Colonic mucosa (tissue), 4 donors: ENCODE measurements at regions of chr5 and their contacts with region 1.

Region 1: GRCh38 chr5:1641560-1642166 is 117.9 kb upstream of the LPCAT1 start:
- DNase-seq: peak; percentile 85
- H3K4me3 ChIP-seq: no peak overlapping the region
- H3K27ac ChIP-seq: no peak overlapping the region
- H3K4me1 ChIP-seq: no peaks in the 10 kb centered on the region
- H3K27me3 ChIP-seq: peaks cover 18% of the 10 kb centered on the region
- CTCF ChIP-seq: peak; percentile 64

Region 2: DNA sequence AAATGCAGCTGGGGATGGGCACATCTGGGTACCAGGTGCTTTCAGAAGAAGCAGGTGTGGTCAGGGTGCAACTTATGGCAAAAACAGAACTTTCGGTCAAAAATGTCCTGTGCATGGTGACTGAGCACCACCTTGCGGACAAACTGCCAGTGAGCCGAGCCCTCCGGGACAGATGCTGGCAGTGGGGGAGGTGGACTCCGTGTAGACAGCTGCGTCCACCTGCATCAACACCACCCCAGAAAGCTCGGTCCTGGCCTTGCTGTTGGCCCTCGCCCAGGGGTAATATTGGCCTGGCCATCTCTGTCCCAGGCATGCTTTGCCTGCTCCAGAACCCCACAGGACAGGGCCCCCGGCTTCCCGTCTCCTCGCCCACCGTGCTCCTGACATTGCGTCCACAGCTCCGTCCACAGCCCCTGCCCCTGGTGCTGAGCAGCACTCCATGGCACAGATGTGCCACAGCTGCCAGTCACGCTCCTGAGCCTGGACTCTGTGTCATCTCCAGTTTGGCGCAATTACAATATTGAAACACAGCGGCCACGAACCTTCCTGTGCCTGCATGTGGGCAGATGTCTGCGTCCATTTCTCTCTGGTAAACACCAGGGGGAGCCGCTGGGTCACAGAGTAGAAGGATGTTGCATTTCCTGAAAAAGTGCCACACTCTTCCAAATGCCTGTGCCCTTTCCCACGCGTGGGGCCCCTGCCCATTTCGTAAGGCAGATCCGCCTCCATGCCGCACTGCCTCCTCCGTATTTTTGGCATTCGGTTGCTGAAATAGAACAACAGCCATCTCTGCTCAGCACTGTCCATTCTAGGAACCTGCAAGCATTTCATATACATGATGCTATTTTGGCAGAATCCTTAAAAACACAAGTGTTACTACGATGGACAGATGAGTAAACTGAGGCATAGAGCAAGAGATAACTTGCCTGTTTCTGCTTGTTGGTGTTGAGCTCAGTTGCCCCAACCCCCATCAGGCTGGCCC is 473.6 kb before region 1 on chr5:
- intact Hi-C with region 1: loop called (anchors 5 kb)
- DNase-seq: peak; percentile 75
- H3K4me3 ChIP-seq: no peak overlapping the region
- H3K27ac ChIP-seq: no peak overlapping the region
- H3K4me1 ChIP-seq: peaks cover 5% of the 10 kb centered on the region
- H3K27me3 ChIP-seq: no peaks in the 10 kb centered on the region
- CTCF ChIP-seq: peak; percentile 21

Region 3: DNA sequence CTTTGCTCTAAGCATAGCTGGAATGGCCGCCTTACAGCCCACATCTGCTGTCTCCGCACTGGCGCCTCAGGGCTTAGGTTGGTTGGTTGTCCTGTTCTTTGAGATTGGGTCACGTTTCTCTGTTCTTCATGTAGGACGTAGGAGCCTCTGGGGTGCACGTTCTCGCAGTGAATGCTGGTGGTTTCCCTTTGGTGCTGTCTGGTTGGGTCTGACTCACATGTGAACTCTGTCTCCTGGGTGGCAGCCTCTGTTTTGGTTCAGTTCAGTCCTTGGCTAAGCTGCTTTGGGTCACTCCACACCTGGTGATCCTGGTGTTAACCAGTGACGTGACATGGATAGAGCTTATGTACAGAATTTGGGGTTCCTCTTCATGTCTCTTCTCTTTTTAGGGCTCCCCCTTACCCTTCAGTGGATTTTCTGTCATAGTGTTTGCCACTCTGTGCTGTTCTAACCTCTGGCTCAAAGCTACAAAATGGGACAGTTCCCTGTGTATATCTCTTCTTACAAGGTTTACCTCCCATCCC is 105.3 kb before region 1 on chr5:
- intact Hi-C with region 1: no loop called
- DNase-seq: peak; percentile 27
- H3K4me3 ChIP-seq: no peak overlapping the region
- H3K27ac ChIP-seq: peak overlapping the region; percentile 10
- H3K4me1 ChIP-seq: no peaks in the 10 kb centered on the region
- H3K27me3 ChIP-seq: no peaks in the 10 kb centered on the region
- CTCF ChIP-seq: no peak